ENCODE measurements at regions of chr3 and their contacts with region 1.

Region 1: DNA sequence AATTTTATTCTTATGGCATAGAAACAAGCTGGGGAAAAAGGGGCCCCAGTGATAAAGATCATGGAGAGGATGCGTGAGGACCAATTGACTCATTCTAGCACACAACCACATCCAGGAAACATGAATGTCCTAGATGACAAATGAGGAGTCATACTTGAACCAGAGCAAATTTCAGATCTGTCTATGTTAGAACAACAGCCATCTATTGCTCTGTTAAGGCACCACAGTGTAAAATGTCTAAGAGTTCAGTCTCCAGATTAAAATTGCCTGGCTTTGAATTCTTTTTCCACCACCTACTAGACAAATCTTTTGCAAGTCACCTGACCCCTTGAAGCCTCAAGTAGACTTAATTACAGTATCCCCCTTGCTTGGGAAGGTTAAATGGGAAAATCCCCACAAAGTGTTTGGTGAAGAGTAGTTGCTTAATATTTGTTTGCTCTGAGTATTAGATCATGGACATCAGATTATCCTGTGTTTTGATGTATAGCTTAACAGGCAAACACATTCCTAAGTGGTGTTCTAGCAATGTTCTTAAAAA is 258.7 kb upstream of the TGFBR2 start:
- DNase-seq: peak; percentile 72
- H3K4me3 Mint-ChIP-seq: peak overlapping the region; percentile 38
- H3K27ac Mint-ChIP-seq: peak overlapping the region; percentile 75
- H3K4me1 Mint-ChIP-seq: peaks cover 72% of the 10 kb centered on the region
- H3K27me3 Mint-ChIP-seq: peaks cover 14% of the 10 kb centered on the region

Region 2: DNA sequence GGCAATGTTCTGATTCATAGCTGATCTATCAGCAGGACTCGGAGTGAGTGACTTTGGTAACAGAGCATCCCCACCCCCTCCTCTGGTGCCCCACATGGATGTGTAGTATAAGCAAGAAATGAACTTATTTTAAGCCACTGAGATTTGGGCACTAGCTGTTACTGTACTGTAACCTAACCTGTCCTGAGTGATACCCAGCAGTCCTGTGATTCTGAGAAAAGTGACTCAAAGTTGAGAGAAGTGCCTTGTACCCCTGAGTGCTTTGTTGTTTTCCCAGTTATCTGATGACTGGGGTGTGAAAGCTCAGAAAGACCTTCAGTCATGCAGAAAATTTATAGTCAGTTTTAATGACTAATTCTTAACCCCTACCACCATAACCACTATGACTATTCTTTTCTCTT is 1506.8 kb before region 1 on chr3:
- CTCF ChIA-PET with region 1: no interaction called
- POLR2A ChIA-PET with region 1: no interaction called
- intact Hi-C with region 1: loop called (anchors 5 kb)
- DNase-seq: peak; percentile 65
- H3K4me3 Mint-ChIP-seq: no peak overlapping the region
- H3K27ac Mint-ChIP-seq: peak overlapping the region; percentile 56
- H3K4me1 Mint-ChIP-seq: peaks cover 6% of the 10 kb centered on the region
- H3K27me3 Mint-ChIP-seq: peaks cover 2% of the 10 kb centered on the region

Region 3: DNA sequence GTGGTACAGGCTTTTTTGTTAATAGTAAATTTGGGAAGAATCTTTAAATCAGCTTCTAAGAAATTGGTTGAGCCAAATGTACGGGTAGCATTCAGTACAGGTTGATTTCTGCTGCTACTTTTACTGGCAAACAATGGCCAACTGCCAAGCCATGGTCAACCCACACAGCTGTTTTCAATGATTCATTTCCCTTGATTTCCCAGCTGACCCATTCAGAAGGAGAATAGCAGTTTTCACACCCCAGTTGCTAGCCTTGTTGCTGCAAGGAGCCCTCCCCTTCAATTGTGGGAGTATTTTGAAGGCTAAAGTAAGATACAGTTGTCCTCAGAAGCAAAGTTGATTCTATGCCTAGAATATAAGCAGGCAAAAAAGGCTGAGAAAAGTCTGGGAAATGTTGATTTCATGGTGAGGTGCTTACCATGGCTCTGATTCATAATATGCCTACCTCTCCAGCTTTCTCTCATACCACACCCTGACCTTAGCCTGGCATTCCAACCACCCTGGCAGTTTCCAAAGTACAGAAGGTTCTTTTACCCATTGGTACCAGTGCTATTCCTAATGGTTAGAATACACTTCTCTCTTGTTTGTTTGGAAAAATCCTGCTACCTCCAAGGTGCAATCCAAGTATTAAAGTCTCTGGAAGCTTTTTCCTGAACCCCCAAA is 61.6 kb before region 1 on chr3:
- CTCF ChIA-PET with region 1: interaction called, 3 read pairs
- POLR2A ChIA-PET with region 1: no interaction called
- intact Hi-C with region 1: loop called (anchors 2 kb)
- DNase-seq: peak; percentile 66
- H3K4me3 Mint-ChIP-seq: no peak overlapping the region
- H3K27ac Mint-ChIP-seq: no peak overlapping the region
- H3K4me1 Mint-ChIP-seq: peaks cover 32% of the 10 kb centered on the region
- H3K27me3 Mint-ChIP-seq: no peaks in the 10 kb centered on the region

Region 4: DNA sequence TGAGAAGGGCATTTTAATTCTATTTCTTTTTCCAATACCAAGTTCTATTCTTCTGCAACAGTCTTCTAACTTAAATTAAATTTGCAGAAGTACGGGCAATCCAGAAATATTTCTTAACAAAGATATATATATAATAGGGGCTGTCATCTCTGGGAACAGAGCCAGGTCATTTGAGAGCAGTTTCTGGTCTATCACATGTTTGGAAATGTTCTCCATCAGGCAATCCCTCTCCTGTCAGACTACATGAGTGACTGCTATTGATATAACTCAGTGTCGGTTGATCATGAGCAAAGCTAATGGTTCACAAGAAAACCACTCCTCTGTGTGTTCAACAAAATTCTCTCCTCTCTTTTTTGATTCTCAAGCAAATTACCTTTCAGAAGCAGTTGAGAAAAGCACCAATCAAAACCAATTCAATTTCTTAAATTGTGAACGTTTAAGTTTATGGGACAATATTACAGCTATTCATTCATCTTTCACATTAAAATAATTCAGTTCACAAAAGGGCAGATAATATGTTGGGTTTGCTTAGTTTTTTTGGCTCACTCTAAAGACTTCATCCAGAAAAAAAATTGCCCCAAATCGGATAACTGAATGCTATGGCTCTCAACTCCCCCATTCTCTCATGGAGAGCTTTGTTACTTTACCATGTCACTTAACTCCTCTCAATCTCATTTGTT is 105.8 kb after region 1 on chr3:
- CTCF ChIA-PET with region 1: no interaction called
- POLR2A ChIA-PET with region 1: no interaction called
- intact Hi-C with region 1: no loop called
- DNase-seq: no peak
- H3K4me3 Mint-ChIP-seq: no peak overlapping the region
- H3K27ac Mint-ChIP-seq: no peak overlapping the region
- H3K4me1 Mint-ChIP-seq: no peaks in the 10 kb centered on the region
- H3K27me3 Mint-ChIP-seq: no peaks in the 10 kb centered on the region

Region 5: DNA sequence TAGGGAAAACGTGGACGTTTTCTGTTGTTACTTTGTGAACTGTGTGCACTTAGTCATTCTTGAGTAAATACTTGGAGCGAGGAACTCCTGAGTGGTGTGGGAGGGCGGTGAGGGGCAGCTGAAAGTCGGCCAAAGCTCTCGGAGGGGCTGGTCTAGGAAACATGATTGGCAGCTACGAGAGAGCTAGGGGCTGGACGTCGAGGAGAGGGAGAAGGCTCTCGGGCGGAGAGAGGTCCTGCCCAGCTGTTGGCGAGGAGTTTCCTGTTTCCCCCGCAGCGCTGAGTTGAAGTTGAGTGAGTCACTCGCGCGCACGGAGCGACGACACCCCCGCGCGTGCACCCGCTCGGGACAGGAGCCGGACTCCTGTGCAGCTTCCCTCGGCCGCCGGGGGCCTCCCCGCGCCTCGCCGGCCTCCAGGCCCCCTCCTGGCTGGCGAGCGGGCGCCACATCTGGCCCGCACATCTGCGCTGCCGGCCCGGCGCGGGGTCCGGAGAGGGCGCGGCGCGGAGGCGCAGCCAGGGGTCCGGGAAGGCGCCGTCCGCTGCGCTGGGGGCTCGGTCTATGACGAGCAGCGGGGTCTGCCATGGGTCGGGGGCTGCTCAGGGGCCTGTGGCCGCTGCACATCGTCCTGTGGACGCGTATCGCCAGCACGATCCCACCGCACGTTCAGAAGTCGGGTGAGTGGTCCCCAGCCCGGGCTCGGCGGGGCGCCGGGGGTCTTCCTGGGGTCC is 258.7 kb after region 1 on chr3 and contains the start of gene TGFBR2:
- CTCF ChIA-PET with region 1: no interaction called
- POLR2A ChIA-PET with region 1: no interaction called
- intact Hi-C with region 1: loop called (anchors 1 kb)
- DNase-seq: peak; percentile 92
- H3K4me3 Mint-ChIP-seq: peak within 1 kb of the TSS; percentile 87
- H3K27ac Mint-ChIP-seq: peak within 1 kb of the TSS; percentile 96
- H3K4me1 Mint-ChIP-seq: peaks cover 53% of the 10 kb centered on the region
- H3K27me3 Mint-ChIP-seq: no peaks in the 10 kb centered on the region
- total RNA-seq, gene TGFBR2: 36.8 to 37.0 TPM

Region 6: GRCh38 chr3:30658328-30659052 is 310.7 kb after region 1 on chr3:
- CTCF ChIA-PET with region 1: no interaction called
- POLR2A ChIA-PET with region 1: interaction called, 4 read pairs
- intact Hi-C with region 1: loop called (anchors 1 kb)
- DNase-seq: peak; percentile 72
- H3K4me3 Mint-ChIP-seq: peak overlapping the region; percentile 68
- H3K27ac Mint-ChIP-seq: peak overlapping the region; percentile 85
- H3K4me1 Mint-ChIP-seq: peaks cover 98% of the 10 kb centered on the region
- H3K27me3 Mint-ChIP-seq: no peaks in the 10 kb centered on the region

Region 7: GRCh38 chr3:31247850-31248562 is 900.3 kb after region 1 on chr3:
- CTCF ChIA-PET with region 1: no interaction called
- POLR2A ChIA-PET with region 1: no interaction called
- intact Hi-C with region 1: loop called (anchors 5 kb)
- DNase-seq: peak; percentile 58
- H3K4me3 Mint-ChIP-seq: no peak overlapping the region
- H3K27ac Mint-ChIP-seq: peak overlapping the region; percentile 67
- H3K4me1 Mint-ChIP-seq: peaks cover 50% of the 10 kb centered on the region
- H3K27me3 Mint-ChIP-seq: no peaks in the 10 kb centered on the region

Measured in activated CD4-positive, alpha-beta memory T cell treated with anti-CD3 and anti-CD28 coated beads for 36 hours (primary cell).